WTC11 (cell line): ENCODE measurements at regions of chr2 and their contacts with region 1.

Region 1: DNA sequence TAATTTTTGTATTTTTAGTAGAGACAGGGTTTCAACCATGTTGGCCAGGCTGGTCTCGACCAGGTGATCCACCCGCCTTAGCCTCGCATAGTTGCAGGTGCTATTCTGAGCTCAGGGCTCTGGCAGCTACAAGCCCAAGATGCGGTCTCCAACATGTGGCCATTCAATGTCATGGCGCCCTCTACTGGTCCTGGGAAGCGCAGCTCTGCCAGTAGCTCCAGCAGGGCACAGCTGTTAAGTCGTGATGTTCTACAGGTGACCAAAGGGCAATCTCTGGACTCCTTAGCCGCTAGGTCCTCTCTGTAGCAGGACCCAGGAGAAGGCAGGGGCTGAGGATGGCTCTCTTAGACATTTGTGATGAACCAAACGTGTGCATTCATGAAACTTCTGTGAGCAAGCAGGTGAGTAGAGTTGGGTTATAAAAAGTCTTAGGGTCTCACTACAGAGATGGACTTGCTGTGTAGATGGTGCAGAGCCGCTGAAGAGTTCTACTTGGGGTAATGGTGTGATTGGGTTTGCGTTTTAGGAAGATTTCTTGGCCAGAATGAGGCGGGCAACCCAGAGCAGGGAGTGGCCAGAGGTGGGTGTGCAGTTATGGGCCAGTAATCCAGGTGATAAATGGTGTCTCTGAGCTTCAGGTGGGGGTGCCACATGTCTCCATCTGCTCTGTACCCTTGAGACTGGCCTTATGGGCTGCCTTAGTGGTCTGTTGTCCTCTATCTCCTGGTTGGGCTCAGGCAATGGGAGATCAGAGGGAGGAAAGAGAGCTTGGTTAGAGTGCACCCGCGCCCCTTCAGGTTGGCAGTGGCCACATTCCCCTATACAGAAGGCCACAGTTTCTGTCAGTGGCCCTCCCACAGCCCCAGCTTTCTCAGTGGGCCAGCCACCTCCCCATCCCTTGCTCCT is 31.0 kb downstream of the IL37 start:
- DNase-seq: peak; percentile 89
- ATAC-seq: peak; percentile 100
- H3K4me3 Mint-ChIP-seq: no peak overlapping the region
- H3K27ac Mint-ChIP-seq: no peak overlapping the region
- H3K4me1 Mint-ChIP-seq: no peaks in the 10 kb centered on the region
- H3K27me3 Mint-ChIP-seq: peaks cover 44% of the 10 kb centered on the region
- CTCF ChIP-seq: peak; percentile 71

Region 2: DNA sequence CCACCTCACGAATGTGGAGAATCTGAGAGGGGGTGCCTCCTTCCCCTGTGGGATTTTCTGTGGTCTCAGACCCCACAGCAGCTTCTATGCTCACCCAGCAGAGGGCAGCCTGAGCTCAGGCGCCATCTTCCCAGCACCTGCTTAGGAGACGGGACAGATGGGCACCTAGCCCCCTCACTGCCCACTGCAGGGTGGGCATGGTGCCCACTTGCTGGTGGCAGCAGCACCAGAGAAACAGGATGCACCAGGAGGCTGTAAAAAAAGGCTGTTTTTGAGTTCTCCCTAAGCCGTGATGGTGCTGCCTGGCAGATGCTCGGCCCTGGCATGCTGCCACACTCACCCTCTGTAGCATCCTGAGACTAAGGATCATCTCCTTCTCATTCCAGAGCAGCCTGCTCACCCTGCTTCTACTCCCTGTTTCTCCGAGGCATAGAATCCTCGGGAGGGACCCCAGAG is 315.4 kb before region 1 on chr2:
- CTCF ChIA-PET with region 1: interaction called, 22 read pairs
- POLR2A ChIA-PET with region 1: no interaction called
- DNase-seq: peak; percentile 55
- ATAC-seq: peak; percentile 81
- H3K4me3 Mint-ChIP-seq: no peak overlapping the region
- H3K27ac Mint-ChIP-seq: no peak overlapping the region
- H3K4me1 Mint-ChIP-seq: peaks cover 31% of the 10 kb centered on the region
- H3K27me3 Mint-ChIP-seq: no peaks in the 10 kb centered on the region; the same call in 1 of the 2 replicates
- CTCF ChIP-seq: peak; percentile 45; the same call in 1 of the 2 replicates

Region 3: GRCh38 chr2:112749755-112750559 is 192.0 kb before region 1 on chr2:
- CTCF ChIA-PET with region 1: interaction called, 82 read pairs
- POLR2A ChIA-PET with region 1: no interaction called
- DNase-seq: peak; percentile 85
- ATAC-seq: peak; percentile 89
- H3K4me3 Mint-ChIP-seq: no peak overlapping the region
- H3K27ac Mint-ChIP-seq: peak overlapping the region; percentile 19; the same call in 1 of the 2 replicates
- H3K4me1 Mint-ChIP-seq: no peaks in the 10 kb centered on the region
- H3K27me3 Mint-ChIP-seq: no peaks in the 10 kb centered on the region
- CTCF ChIP-seq: peak; percentile 76

Region 4: DNA sequence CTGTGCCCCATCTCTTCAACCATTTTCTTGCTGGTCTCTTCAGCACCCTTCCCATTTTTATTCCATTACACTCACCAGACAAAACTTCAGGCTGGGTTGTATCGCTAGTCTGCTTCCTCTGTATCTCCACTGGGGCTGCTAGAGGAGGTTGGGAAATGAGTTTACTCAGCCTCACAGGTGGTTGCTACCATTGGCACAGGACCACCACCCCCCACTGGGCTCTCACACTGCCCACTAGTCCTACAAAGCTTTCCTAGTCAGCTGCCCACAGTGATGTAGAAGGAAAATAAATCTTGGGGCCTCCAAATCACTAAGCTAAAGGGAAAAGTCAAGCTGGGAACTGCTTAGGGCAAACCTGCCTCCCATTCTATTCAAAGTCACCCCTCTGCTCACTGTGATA is 93.2 kb before region 1 on chr2:
- CTCF ChIA-PET with region 1: interaction called, 12 read pairs
- POLR2A ChIA-PET with region 1: no interaction called
- DNase-seq: no peak
- ATAC-seq: peak; percentile 43
- H3K4me3 Mint-ChIP-seq: no peak overlapping the region
- H3K27ac Mint-ChIP-seq: peak overlapping the region; percentile 75
- H3K4me1 Mint-ChIP-seq: peaks cover 47% of the 10 kb centered on the region
- H3K27me3 Mint-ChIP-seq: peaks cover 6% of the 10 kb centered on the region
- CTCF ChIP-seq: no peak

Region 5: GRCh38 chr2:112924821-112925220 is 17.2 kb before region 1 on chr2:
- CTCF ChIA-PET with region 1: interaction called, 44 read pairs
- POLR2A ChIA-PET with region 1: no interaction called
- DNase-seq: no peak
- ATAC-seq: no peak
- H3K4me3 Mint-ChIP-seq: no peak overlapping the region
- H3K27ac Mint-ChIP-seq: no peak overlapping the region
- H3K4me1 Mint-ChIP-seq: peaks cover 4% of the 10 kb centered on the region; the same call in 1 of the 2 replicates
- H3K27me3 Mint-ChIP-seq: peaks cover 18% of the 10 kb centered on the region
- CTCF ChIP-seq: no peak

Region 6: GRCh38 chr2:113080134-113080533 is 138.1 kb after region 1 on chr2:
- CTCF ChIA-PET with region 1: interaction called, 11 read pairs
- POLR2A ChIA-PET with region 1: no interaction called
- DNase-seq: peak; percentile 75
- ATAC-seq: peak; percentile 96
- H3K4me3 Mint-ChIP-seq: no peak overlapping the region
- H3K27ac Mint-ChIP-seq: no peak overlapping the region
- H3K4me1 Mint-ChIP-seq: peaks cover 8% of the 10 kb centered on the region
- H3K27me3 Mint-ChIP-seq: peaks cover 26% of the 10 kb centered on the region
- CTCF ChIP-seq: peak; percentile 39; the same call in 1 of the 2 replicates